ENCODE measurements at regions of chr10 and their contacts with region 1.

Region 1: DNA sequence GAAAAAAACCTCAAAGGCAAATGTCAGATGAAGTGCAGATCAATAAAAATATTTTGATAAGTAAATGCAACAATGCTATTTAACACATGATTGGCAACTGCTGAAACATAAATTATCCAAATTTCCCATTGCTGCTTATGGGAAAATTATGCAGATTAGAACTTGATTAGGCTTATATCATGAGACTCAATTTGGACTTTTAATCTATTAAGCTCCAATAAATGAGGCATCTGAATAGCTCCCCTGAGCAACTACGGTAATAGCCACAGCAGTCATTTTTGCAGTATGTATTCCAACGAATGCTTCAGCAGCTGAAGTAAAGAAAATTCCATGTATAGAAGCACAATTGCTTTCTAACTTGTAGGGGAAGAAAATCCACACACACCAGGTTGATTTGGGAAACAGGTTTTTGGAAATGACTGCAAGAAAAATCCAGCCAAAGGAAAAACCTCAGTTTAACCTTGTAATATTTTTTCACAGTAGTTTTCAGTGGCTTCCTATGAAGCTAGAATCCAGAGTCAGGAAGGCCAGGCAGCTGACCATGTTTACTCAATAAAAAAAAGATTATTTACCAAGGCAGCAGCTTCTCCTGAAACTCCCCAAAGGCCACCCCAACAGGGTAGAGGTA is 716.1 kb downstream of the KCNMA1 start:
- DNase-seq: no peak
- ATAC-seq: no peak
- H3K4me3 ChIP-seq: no peak overlapping the region
- H3K4me1 ChIP-seq: no peaks in the 10 kb centered on the region
- CTCF ChIP-seq: no peak

Region 2: DNA sequence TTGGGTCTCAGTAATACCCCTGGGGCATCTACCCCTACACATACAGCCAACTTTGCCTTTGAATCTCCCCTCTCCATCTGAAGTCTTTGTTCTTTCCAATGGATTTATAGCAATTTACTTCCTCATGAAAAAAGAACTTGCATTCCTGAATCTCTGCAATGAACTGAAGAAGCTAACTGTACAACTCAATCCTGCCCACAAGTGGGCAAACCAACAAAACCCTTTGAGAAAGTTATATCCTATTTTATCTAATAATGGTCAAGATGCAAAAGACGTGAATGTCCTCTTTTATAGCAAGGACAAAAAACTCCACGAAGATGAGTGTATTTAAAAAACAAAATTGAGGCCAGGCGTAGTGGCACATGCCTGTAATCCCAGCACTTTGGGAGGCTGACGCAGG is 498.7 kb before region 1 on chr10:
- intact Hi-C with region 1: no loop called
- DNase-seq: no peak
- ATAC-seq: no peak
- H3K4me3 ChIP-seq: no peak overlapping the region
- H3K4me1 ChIP-seq: no peaks in the 10 kb centered on the region
- CTCF ChIP-seq: no peak

Region 3: DNA sequence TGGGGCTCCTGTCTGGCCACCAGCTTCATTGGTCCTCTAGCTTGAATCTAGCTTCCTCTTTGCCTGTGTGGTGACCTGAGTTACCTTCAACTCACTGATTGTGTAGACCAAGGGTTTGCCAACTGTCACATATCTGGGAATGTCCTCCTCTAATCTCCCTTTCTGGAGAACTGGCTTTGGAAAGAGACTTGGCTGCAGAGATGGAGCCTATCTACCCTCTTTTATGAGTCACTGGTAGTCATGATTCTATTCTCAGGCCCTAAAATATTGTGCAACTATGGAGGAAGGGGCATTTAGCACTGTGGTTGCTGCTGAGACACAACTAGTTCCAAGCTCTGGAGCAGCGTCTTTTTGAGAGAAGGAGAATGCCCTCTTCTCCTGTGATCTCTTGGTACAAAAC is 24.8 kb after region 1 on chr10:
- intact Hi-C with region 1: loop called in 1 of 2 experiments (anchors 2 kb)
- DNase-seq: no peak
- ATAC-seq: no peak
- H3K4me3 ChIP-seq: no peak overlapping the region
- H3K4me1 ChIP-seq: no peaks in the 10 kb centered on the region
- CTCF ChIP-seq: no peak